Activated naive CD4-positive, alpha-beta T cell treated with anti-CD3 and anti-CD28 coated beads for 36 hours (primary cell): ENCODE measurements at regions of chr3 and their contacts with region 1.

Region 1: GRCh38 chr3:108780235-108780634 is 23.0 kb upstream of the RETNLB start:
- DNase-seq: peak; percentile 53
- H3K4me3 Mint-ChIP-seq: no peak overlapping the region
- H3K27ac Mint-ChIP-seq: no peak overlapping the region
- H3K4me1 Mint-ChIP-seq: peaks cover 38% of the 10 kb centered on the region
- H3K27me3 Mint-ChIP-seq: no peaks in the 10 kb centered on the region

Region 2: GRCh38 chr3:108757404-108757982 is 22.7 kb before region 1 on chr3 and contains the start of gene RETNLB:
- CTCF ChIA-PET with region 1: no interaction called
- intact Hi-C with region 1: no loop called
- DNase-seq: no peak
- H3K4me3 Mint-ChIP-seq: no peak within 1 kb of the TSS
- H3K27ac Mint-ChIP-seq: no peak within 1 kb of the TSS
- H3K4me1 Mint-ChIP-seq: peaks cover 5% of the 10 kb centered on the region
- H3K27me3 Mint-ChIP-seq: no peaks in the 10 kb centered on the region
- total RNA-seq, gene RETNLB: not detected

Region 3: GRCh38 chr3:108806316-108806715 is 26.1 kb after region 1 on chr3:
- CTCF ChIA-PET with region 1: no interaction called
- intact Hi-C with region 1: loop called (anchors 1 kb)
- DNase-seq: peak; percentile 26
- H3K4me3 Mint-ChIP-seq: no peak overlapping the region
- H3K27ac Mint-ChIP-seq: peak overlapping the region; percentile 22
- H3K4me1 Mint-ChIP-seq: peaks cover 17% of the 10 kb centered on the region
- H3K27me3 Mint-ChIP-seq: no peaks in the 10 kb centered on the region